ENCODE measurements at regions of chr3 and their contacts with region 1.

Region 1: GRCh38 chr3:113844622-113845222 is 6.1 kb downstream of the GRAMD1C start:
- ATAC-seq: peak in 3 of 8 experiments; percentile 29 to 59 (median 44)
- H3K4me3 ChIP-seq: no peak overlapping the region
- H3K27ac ChIP-seq: no peak overlapping the region
- H3K4me1 ChIP-seq: no peaks in the 10 kb centered on the region

Region 2: GRCh38 chr3:113912552-113913236 is 68.0 kb after region 1 on chr3:
- in situ Hi-C with region 1: loop called in 1 of 9 experiments (anchors 10 kb)
- ATAC-seq: peak in 3 of 8 experiments; percentile 76 to 78 (median 77)
- H3K4me3 ChIP-seq: no peak overlapping the region
- H3K27ac ChIP-seq: no peak overlapping the region
- H3K4me1 ChIP-seq: no peaks in the 10 kb centered on the region

Region 3: DNA sequence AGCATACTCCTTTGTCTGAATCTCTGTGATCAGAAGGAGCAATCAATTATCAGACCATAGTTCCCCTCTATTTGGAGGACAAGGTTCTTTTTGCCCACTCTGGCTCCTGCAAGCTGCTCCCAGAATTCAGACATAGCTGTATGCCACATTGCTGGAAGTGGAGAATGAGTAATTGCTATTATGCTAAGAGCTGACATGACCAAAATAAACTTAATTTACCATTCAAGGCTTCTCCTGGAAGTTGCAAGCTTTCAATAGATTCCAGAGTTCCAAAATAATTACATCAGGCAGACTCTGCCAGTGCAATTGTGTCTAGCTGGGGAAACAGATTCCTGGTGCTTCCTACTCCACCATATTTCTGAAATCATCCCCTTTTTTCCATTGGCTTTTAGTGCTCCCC is 341.8 kb after region 1 on chr3:
- in situ Hi-C with region 1: no loop called
- ATAC-seq: peak in 2 of 8 experiments; percentile 65 to 92
- H3K4me3 ChIP-seq: no peak overlapping the region
- H3K27ac ChIP-seq: no peak overlapping the region
- H3K4me1 ChIP-seq: no peaks in the 10 kb centered on the region

Measured in motor neuron (in vitro differentiated cells).